Activated CD4-positive, alpha-beta memory T cell treated with anti-CD3 and anti-CD28 coated beads for 36 hours (primary cell): ENCODE measurements at regions of chr15 and their contacts with region 1.

Region 1: DNA sequence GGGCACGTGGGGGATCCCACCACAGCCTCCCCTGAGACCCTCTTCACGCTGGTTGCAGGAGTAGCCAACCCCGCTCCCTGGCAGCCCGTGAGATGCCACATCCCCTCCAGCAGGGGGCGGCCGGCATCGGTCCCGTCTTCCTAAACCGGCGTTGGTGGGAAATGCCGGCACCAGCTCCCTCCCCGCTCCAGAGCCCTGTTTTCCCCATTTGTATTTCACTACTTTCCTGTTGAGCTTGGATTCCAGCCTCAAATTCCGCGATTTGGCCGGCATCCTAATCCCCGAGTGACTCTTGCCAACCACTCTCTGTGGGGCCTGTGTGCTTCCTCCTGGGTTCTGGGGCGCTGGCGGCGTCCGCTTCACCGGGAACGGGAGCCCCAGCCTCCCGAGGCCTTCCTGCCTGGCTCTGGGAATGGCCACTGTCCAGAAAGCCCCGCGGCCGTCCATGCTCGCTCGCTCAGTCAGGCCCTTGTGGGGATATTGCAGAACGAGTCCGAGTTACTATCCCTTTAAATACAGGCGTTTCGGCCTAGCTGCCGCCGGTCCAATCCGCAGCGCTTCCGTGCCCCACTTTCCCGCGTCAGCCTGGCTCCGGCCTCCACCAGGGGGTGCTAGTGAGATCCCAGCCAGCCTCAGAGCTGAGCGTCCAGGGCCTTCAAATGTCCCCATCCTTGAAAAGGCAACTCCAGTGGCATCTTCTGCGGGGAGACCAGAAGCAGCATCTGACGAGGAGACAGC is 8.1 kb upstream of the ADAMTS17 start:
- DNase-seq: peak; percentile 94
- H3K4me3 Mint-ChIP-seq: peak overlapping the region; percentile 80
- H3K27ac Mint-ChIP-seq: peak overlapping the region; percentile 69
- H3K4me1 Mint-ChIP-seq: peaks cover 6% of the 10 kb centered on the region
- H3K27me3 Mint-ChIP-seq: peaks cover 7% of the 10 kb centered on the region

Region 2: DNA sequence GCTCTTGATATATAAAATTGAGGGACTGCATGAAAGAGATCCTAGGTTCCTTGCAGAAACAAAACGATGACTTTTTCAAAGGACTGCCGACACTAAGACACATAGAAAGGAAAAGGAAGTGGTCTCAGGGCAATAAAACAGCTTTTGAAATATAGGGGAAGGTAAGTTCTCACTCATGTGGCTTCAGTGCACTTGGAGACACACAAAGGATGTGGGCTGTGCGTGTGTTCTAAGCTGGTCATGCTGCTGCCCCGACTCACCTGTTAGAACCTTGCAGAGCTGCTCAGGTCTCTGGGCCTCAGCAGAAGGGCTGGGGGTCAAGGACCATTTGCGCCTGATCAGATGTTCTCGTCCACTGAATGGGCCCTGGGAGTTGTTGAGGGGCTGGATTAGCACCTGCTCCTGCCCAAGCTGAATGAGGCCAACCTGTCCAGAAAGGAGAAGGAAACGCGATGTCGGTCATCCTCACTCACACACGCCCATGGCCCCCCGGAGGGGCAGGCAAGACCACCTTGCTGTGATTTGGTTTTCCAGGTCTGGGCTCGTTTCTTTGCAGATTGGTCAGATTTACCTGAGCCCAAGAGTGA is 19.1 kb before region 1 on chr15:
- CTCF ChIA-PET with region 1: interaction called, 182 read pairs
- POLR2A ChIA-PET with region 1: interaction called, 3 read pairs
- intact Hi-C with region 1: no loop called
- DNase-seq: peak; percentile 51
- H3K4me3 Mint-ChIP-seq: no peak overlapping the region
- H3K27ac Mint-ChIP-seq: peak overlapping the region; percentile 8
- H3K4me1 Mint-ChIP-seq: peaks cover 54% of the 10 kb centered on the region
- H3K27me3 Mint-ChIP-seq: no peaks in the 10 kb centered on the region

Region 3: DNA sequence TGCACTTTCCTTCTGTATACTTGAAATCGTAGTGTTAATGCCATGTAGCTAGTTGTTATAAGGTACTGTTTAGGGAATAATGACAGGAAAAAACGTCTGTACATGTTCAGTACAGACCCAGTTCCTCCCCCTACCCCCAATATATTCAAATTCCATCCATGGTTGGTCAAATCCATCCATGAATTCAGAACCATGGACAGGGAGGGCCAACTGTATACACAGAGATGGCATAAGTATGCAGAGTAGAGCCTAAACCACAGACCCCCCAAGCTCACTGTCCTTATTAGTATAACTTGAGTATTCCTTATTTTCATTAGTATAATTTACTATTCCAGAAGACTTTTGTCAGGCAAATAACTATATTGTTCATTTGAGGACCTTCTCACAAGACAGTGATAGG is 43.1 kb after region 1 on chr15:
- CTCF ChIA-PET with region 1: interaction called, 16 read pairs
- POLR2A ChIA-PET with region 1: no interaction called
- intact Hi-C with region 1: no loop called
- DNase-seq: no peak
- H3K4me3 Mint-ChIP-seq: no peak overlapping the region
- H3K27ac Mint-ChIP-seq: no peak overlapping the region
- H3K4me1 Mint-ChIP-seq: no peaks in the 10 kb centered on the region
- H3K27me3 Mint-ChIP-seq: peaks cover 3% of the 10 kb centered on the region

Region 4: DNA sequence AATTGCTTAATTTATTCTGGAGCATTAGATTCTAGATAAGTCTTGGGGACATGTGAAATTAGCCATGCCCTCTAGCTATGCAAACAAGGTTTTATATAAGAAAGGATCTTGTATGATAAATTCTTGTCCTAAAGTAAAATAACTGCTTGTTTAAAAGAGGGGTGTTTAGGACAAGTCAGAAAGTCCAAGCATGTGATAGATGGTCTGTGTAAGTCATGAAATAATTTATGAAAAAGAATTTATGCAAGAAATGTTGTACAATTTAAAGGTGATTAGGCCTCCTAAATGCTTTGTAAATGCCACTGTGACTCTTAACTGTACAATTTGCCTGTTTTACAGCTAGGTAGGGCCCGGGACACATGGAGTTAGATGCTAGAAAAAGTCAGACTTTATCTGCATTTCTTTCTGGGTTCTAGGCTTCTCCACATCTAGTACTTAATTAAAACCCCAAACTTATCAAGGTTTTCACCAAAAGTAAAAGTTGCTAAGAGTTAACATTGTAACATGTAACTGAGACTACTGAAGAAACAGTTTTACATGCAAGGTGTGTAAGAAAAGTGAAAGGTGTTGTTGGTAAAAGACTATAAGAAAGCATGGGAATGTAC is 238.9 kb after region 1 on chr15:
- CTCF ChIA-PET with region 1: interaction called, 15 read pairs
- POLR2A ChIA-PET with region 1: no interaction called
- intact Hi-C with region 1: no loop called
- DNase-seq: no peak
- H3K4me3 Mint-ChIP-seq: no peak overlapping the region
- H3K27ac Mint-ChIP-seq: no peak overlapping the region
- H3K4me1 Mint-ChIP-seq: peaks cover 57% of the 10 kb centered on the region
- H3K27me3 Mint-ChIP-seq: no peaks in the 10 kb centered on the region

Region 5: DNA sequence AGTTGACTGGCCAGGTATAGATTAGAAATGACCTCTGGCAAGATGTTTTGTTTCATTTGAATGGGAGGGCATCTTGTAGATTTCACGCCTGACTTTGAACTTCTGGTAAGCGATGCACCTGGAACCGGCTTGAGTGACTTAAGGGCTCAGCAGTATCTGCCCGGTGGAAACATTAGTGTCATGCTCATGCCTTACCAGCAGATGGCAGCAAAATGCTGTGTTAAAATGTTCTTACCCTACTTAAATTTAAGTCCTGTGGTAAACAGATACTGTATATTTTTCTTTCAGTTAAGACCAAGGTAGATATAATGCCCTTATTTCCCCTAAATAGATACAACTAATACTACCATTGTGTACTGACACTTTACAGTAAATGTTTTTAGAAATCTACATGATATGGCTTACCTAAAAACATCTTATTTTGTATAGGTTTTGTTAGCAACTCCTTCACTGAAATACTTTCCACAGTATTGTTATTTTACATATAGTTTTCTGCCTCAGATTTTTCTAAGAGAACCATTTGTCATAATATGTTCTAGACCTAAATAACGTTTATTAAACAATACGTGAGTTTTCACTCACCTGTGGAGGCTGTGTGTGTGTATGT is 278.0 kb after region 1 on chr15:
- CTCF ChIA-PET with region 1: interaction called, 13 read pairs
- POLR2A ChIA-PET with region 1: no interaction called
- intact Hi-C with region 1: no loop called
- DNase-seq: peak; percentile 69
- H3K4me3 Mint-ChIP-seq: no peak overlapping the region
- H3K27ac Mint-ChIP-seq: no peak overlapping the region
- H3K4me1 Mint-ChIP-seq: peaks cover 8% of the 10 kb centered on the region
- H3K27me3 Mint-ChIP-seq: no peaks in the 10 kb centered on the region

Region 6: DNA sequence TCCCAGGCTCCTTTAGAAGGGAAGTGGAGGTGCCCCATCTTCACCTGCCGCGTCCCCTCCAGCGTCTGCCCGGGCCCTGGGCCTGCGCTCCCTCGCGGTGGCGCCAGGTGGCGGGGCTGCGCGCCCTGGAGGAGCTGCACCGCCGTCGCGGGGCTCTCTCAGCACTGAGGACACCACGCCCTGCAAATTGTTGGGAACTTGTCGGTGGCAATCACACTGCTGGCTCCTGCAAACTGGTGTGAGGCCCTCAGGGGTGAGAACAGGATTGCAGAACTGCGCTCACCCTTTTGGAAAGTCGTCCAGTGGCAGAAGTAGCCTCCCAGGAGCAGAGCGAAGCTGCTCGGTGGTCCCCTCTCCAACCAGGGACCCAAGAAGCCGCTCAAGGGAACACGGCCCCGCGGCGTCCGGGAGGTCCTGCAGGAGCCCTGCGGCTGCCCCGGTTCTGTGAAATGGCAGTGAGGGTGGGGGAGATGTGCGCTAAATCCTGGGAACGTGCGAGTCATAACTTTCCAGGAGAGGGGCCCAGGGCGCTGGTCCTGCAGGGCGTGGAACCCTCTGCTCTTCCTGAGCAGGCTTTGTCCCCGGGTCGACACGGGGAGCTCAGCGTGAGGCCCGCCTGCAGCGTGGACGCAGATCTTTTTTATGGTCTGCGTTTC is 568.3 kb after region 1 on chr15:
- CTCF ChIA-PET with region 1: interaction called, 12 read pairs
- POLR2A ChIA-PET with region 1: no interaction called
- intact Hi-C with region 1: no loop called
- DNase-seq: peak; percentile 76
- H3K4me3 Mint-ChIP-seq: peak overlapping the region; percentile 67
- H3K27ac Mint-ChIP-seq: no peak overlapping the region
- H3K4me1 Mint-ChIP-seq: peaks cover 17% of the 10 kb centered on the region
- H3K27me3 Mint-ChIP-seq: peaks cover 45% of the 10 kb centered on the region